A549 (cell line): ENCODE measurements at regions of chr5 and their contacts with region 1.

Region 1: GRCh38 chr5:88729084-88729828 is 153.7 kb downstream of the MEF2C start:
- DNase-seq: peak; percentile 13 to 75
- ATAC-seq: peak; percentile 92 to 97
- H3K4me3 ChIP-seq: no peak overlapping the region
- H3K27ac ChIP-seq: no peak overlapping the region
- H3K4me1 ChIP-seq: no peaks in the 10 kb centered on the region
- CTCF ChIP-seq: peak; percentile 87
- EP300 ChIP-seq: no peak
- POLR2A ChIP-seq: no peak
- RAD21 ChIP-seq: peak; percentile 85 to 89

Region 2: DNA sequence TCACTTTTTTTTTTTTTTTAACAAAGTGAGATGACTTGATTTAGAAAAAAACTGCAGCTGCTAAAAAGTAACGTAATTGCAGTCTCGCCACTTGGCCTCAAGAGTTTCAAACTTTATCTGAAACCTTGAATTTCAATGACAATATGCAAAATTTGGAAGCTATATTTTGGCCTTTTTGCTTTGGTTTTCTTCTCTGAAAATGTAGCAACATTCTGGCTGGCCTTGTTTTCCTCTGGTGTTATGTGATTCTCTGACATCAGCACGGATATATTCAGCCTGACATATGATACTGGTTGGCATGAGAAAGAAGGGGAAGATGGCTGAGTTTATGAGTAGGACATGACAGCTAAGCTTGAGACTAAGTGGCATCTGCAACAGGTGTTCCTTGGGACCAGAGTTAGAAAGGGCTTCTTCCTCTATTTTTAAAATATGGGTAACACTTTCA is 17.2 kb after region 1 on chr5:
- CTCF ChIA-PET with region 1: interaction called, 42 read pairs
- POLR2A ChIA-PET with region 1: no interaction called
- DNase-seq: no peak
- ATAC-seq: no peak
- H3K4me3 ChIP-seq: no peak overlapping the region
- H3K27ac ChIP-seq: no peak overlapping the region
- H3K4me1 ChIP-seq: peaks cover 19% of the 10 kb centered on the region; the same call in 2 of the 3 replicates
- CTCF ChIP-seq: no peak
- EP300 ChIP-seq: no peak
- POLR2A ChIP-seq: no peak
- RAD21 ChIP-seq: no peak